HCT116 (cell line): ENCODE measurements at regions of chr11 and their contacts with region 1.

Region 1: GRCh38 chr11:19240420-19241259 is at the start of gene E2F8:
- DNase-seq: peak; percentile 93
- ATAC-seq: peak; percentile 90
- H3K4me3 ChIP-seq: peak within 1 kb of the TSS; percentile 76 to 94
- H3K27ac ChIP-seq: peak within 1 kb of the TSS; percentile 67
- H3K4me1 ChIP-seq: peaks cover 10 to 46% of the 10 kb centered on the region in 2 experiments
- H3K27me3 ChIP-seq: no peaks in the 10 kb centered on the region
- CTCF ChIP-seq: no peak
- POLR2A ChIP-seq: no peak
- RAD21 ChIP-seq: no peak
- total RNA-seq, gene E2F8: 18.4 TPM

Region 2: GRCh38 chr11:19116971-19117750 is 123.5 kb before region 1 on chr11 and contains the start of gene ZDHHC13:
- CTCF ChIA-PET with region 1: interaction called, 3 read pairs
- POLR2A ChIA-PET with region 1: no interaction called
- RAD21 ChIA-PET with region 1: no interaction called
- intact Hi-C with region 1: loop called (anchors 2 kb)
- DNase-seq: peak; percentile 80
- ATAC-seq: peak; percentile 97
- H3K4me3 ChIP-seq: peak within 1 kb of the TSS; percentile 82 to 86
- H3K27ac ChIP-seq: peak within 1 kb of the TSS; percentile 59
- H3K4me1 ChIP-seq: peaks cover 5 to 29% of the 10 kb centered on the region in 2 experiments; a peak in 3 of 4 replicates
- H3K27me3 ChIP-seq: no peaks in the 10 kb centered on the region
- CTCF ChIP-seq: peak; percentile 32 to 57 (median 52); a peak in 4 of 6 replicates
- POLR2A ChIP-seq: peak; percentile 24
- RAD21 ChIP-seq: peak; percentile 31; the same call in 1 of the 2 replicates
- total RNA-seq, gene ZDHHC13: 21.8 TPM

Region 3: GRCh38 chr11:19306179-19306944 is 65.7 kb after region 1 on chr11:
- CTCF ChIA-PET with region 1: no interaction called
- POLR2A ChIA-PET with region 1: no interaction called
- RAD21 ChIA-PET with region 1: no interaction called
- intact Hi-C with region 1: no loop called
- DNase-seq: no peak
- ATAC-seq: no peak
- H3K4me3 ChIP-seq: no peak overlapping the region
- H3K27ac ChIP-seq: no peak overlapping the region
- H3K4me1 ChIP-seq: no peaks in the 10 kb centered on the region
- H3K27me3 ChIP-seq: peaks cover 33% of the 10 kb centered on the region
- CTCF ChIP-seq: no peak
- POLR2A ChIP-seq: no peak
- RAD21 ChIP-seq: no peak